ENCODE measurements at regions of chr16 and their contacts with region 1.

Region 1: GRCh38 chr16:25014500-25015147 is 545 bp downstream of the ARHGAP17 start:
- DNase-seq: peak in 7 of 9 donors; percentile 16 to 39 (median 23)
- ATAC-seq: peak; percentile 26
- H3K4me3 ChIP-seq: peak overlapping the region; percentile 81
- H3K4me3 Mint-ChIP-seq: peak overlapping the region; percentile 83 to 97 (median 94)
- H3K27ac ChIP-seq: peak overlapping the region; percentile 94
- H3K27ac Mint-ChIP-seq: peak overlapping the region; percentile 87 to 98 (median 95)
- H3K4me1 ChIP-seq: peaks cover 24 to 50% of the 10 kb centered on the region in 2 donors
- H3K4me1 Mint-ChIP-seq: peaks cover 59 to 88% (median 76%) of the 10 kb centered on the region in 7 donors
- H3K27me3 ChIP-seq: no peaks in the 10 kb centered on the region
- H3K27me3 Mint-ChIP-seq: no peaks in the 10 kb centered on the region

Region 2: GRCh38 chr16:24729362-24729984 is 285.2 kb before region 1 on chr16 and contains the start of gene TNRC6A:
- CTCF ChIA-PET with region 1: no interaction called
- POLR2A ChIA-PET with region 1: no interaction called
- intact Hi-C with region 1: loop called in 1 of 2 experiments (anchors 10 kb)
- DNase-seq: peak; percentile 68 to 86 (median 78)
- ATAC-seq: peak; percentile 88
- H3K4me3 ChIP-seq: peak within 1 kb of the TSS; percentile 90
- H3K4me3 Mint-ChIP-seq: peak within 1 kb of the TSS; percentile 89 to 100 (median 96)
- H3K27ac ChIP-seq: peak within 1 kb of the TSS; percentile 98
- H3K27ac Mint-ChIP-seq: peak within 1 kb of the TSS; percentile 93 to 100 (median 98)
- H3K4me1 ChIP-seq: peaks cover 17 to 20% of the 10 kb centered on the region in 2 donors
- H3K4me1 Mint-ChIP-seq: peaks cover 30 to 55% (median 45%) of the 10 kb centered on the region in 7 donors
- H3K27me3 ChIP-seq: no peaks in the 10 kb centered on the region
- H3K27me3 Mint-ChIP-seq: peaks cover 0 to 6% (median 0%) of the 10 kb centered on the region in 5 donors
- total RNA-seq, gene TNRC6A: 46.9 to 110 (median 77.8) TPM

Region 3: GRCh38 chr16:24988593-24989338 is 25.9 kb before region 1 on chr16:
- CTCF ChIA-PET with region 1: no interaction called
- POLR2A ChIA-PET with region 1: interaction called, 3 read pairs
- intact Hi-C with region 1: loop called in 1 of 2 experiments (anchors 2 kb)
- DNase-seq: no peak
- ATAC-seq: no peak
- H3K4me3 ChIP-seq: no peak overlapping the region
- H3K4me3 Mint-ChIP-seq: peak overlapping the region in 2 of 10 donors; percentile 29 to 31
- H3K27ac ChIP-seq: no peak overlapping the region
- H3K27ac Mint-ChIP-seq: peak overlapping the region in 7 of 9 donors; percentile 7 to 86 (median 44)
- H3K4me1 ChIP-seq: peaks cover 3 to 10% of the 10 kb centered on the region in 2 donors
- H3K4me1 Mint-ChIP-seq: peaks cover 49 to 93% (median 79%) of the 10 kb centered on the region in 7 donors
- H3K27me3 ChIP-seq: no peaks in the 10 kb centered on the region
- H3K27me3 Mint-ChIP-seq: no peaks in the 10 kb centered on the region

Region 4: GRCh38 chr16:25051406-25052150 is 37.0 kb after region 1 on chr16:
- CTCF ChIA-PET with region 1: interaction called, 11 read pairs
- POLR2A ChIA-PET with region 1: interaction called, 145 read pairs
- intact Hi-C with region 1: loop called (anchors 1 kb)
- DNase-seq: peak in 1 of 9 donors; percentile 21
- ATAC-seq: no peak
- H3K4me3 ChIP-seq: peak overlapping the region; percentile 25
- H3K4me3 Mint-ChIP-seq: peak overlapping the region; percentile 45 to 85 (median 70)
- H3K27ac ChIP-seq: peak overlapping the region; percentile 39
- H3K27ac Mint-ChIP-seq: peak overlapping the region; percentile 43 to 99 (median 96)
- H3K4me1 ChIP-seq: peaks cover 23 to 36% of the 10 kb centered on the region in 2 donors
- H3K4me1 Mint-ChIP-seq: peaks cover 30 to 60% (median 54%) of the 10 kb centered on the region in 7 donors
- H3K27me3 ChIP-seq: no peaks in the 10 kb centered on the region
- H3K27me3 Mint-ChIP-seq: no peaks in the 10 kb centered on the region

Region 5: GRCh38 chr16:25257504-25257955 is 242.9 kb after region 1 on chr16 and contains the start of gene ZKSCAN2:
- CTCF ChIA-PET with region 1: no interaction called
- POLR2A ChIA-PET with region 1: no interaction called
- intact Hi-C with region 1: loop called in 1 of 2 experiments (anchors 2 kb)
- DNase-seq: peak; percentile 66 to 90 (median 76)
- ATAC-seq: peak; percentile 89
- H3K4me3 ChIP-seq: peak within 1 kb of the TSS; percentile 90
- H3K4me3 Mint-ChIP-seq: peak within 1 kb of the TSS; percentile 90 to 98 (median 96)
- H3K27ac ChIP-seq: peak within 1 kb of the TSS; percentile 93
- H3K27ac Mint-ChIP-seq: peak within 1 kb of the TSS; percentile 95 to 98 (median 96)
- H3K4me1 ChIP-seq: peaks cover 16 to 39% of the 10 kb centered on the region in 2 donors
- H3K4me1 Mint-ChIP-seq: peaks cover 48 to 74% (median 66%) of the 10 kb centered on the region in 7 donors
- H3K27me3 ChIP-seq: no peaks in the 10 kb centered on the region
- H3K27me3 Mint-ChIP-seq: no peaks in the 10 kb centered on the region
- total RNA-seq, gene ZKSCAN2: 4.7 to 7.0 (median 5.2) TPM